Left cardiac atrium (tissue), 4 donors: ENCODE measurements at regions of chr1 and their contacts with region 1.

Region 1: DNA sequence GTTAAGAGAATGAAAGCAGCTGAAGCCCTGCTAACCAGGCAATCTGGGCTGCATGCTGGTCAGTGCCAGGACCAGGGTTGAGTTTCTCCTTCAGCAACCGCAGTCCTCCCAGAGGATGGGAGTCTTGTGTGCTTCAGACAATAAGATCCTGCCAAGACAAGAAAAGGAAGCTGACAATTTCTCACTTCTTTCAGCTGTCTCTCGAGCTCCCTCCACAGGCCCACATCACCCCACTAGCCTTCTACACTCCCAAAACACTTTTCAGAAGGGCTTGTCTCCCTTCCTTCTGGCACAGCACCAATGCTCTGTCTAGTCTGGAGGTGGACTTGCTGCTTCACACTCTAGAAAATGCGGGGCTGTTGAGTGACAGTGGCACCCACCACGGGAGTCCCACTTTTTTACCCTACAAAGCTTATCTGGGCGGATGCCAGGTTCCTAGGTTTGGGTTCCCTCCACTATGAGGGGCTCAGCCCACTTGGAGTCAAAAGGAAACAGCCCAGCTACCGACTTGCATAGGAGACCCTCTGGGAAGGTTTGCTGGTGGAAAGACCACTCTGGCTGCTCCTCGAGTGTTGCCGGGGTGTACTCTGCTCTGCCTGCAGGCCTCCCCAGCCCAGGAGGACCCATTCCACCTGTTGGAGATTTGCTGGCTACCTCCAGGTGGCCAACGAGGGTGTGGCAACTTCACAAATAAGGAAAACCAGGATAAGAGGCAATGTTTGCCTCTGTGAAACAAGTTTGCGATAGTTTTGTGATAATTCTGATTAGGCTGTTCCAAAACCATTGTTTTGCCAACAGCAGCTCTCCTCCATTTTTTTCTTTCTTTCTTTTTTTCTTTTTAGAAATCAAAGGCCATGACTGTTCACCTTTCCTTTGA is 68.9 kb downstream of the TENT5C start:
- DNase-seq: no peak
- ATAC-seq: no peak

Region 2: GRCh38 chr1:117572546-117572945 is 102.2 kb before region 1 on chr1:
- intact Hi-C with region 1: no loop called
- DNase-seq: no peak
- ATAC-seq: no peak

Region 3: GRCh38 chr1:117605774-117606648 is 68.7 kb before region 1 on chr1 and contains the start of gene TENT5C:
- intact Hi-C with region 1: loop called in 1 of 2 experiments (anchors 5 kb)
- DNase-seq: peak; percentile 98
- ATAC-seq: peak; percentile 96 to 97
- total RNA-seq, gene TENT5C: 16.3 to 21.6 TPM